ENCODE measurements at regions of chr16 and their contacts with region 1.

Region 1: DNA sequence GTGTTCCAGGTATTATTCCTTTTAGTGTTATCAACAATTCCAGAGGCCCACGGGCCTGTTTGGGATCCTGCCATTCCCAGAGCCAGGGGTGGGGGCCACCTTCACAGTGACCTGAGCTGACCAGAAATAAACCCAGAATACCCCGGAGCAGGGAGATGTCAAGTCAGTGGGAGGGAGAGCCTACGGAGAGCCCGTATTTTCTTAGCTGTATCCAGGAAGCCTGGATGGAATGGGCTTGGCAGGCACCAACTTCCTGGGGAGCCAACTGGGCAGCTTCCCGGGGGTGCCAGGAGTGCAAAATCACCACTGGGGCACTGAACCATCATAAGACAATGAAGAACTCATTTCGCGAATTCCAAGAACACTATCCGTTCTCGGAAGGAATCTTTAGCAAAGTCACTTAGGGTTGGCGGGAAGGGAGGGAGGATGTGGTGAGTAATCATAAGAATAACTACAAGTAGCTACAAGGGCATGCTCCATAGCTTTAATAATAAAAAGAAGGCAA is 13.2 kb upstream of the MRTFB start:
- DNase-seq: peak; percentile 96
- H3K4me3 ChIP-seq: peak overlapping the region in 1 of 3 experiments; percentile 12
- H3K27ac ChIP-seq: peak overlapping the region; percentile 99
- H3K4me1 ChIP-seq: peaks cover 26% of the 10 kb centered on the region
- H3K27me3 ChIP-seq: no peaks in the 10 kb centered on the region
- CTCF ChIP-seq: no peak
- POLR2A ChIP-seq: peak; percentile 57

Region 2: GRCh38 chr16:14003074-14003570 is 54.8 kb before region 1 on chr16:
- CTCF ChIA-PET with region 1: interaction called, 3 read pairs
- POLR2A ChIA-PET with region 1: no interaction called
- dilution Hi-C with region 1: no loop called
- intact Hi-C with region 1: loop called (anchors 2 kb)
- DNase-seq: peak; percentile 29
- H3K4me3 ChIP-seq: peak overlapping the region in 2 of 3 experiments; percentile 7 to 12
- H3K27ac ChIP-seq: no peak overlapping the region
- H3K4me1 ChIP-seq: peaks cover 16% of the 10 kb centered on the region
- H3K27me3 ChIP-seq: peaks cover 8 to 11% of the 10 kb centered on the region in 2 experiments
- CTCF ChIP-seq: no peak
- POLR2A ChIP-seq: no peak

Region 3: DNA sequence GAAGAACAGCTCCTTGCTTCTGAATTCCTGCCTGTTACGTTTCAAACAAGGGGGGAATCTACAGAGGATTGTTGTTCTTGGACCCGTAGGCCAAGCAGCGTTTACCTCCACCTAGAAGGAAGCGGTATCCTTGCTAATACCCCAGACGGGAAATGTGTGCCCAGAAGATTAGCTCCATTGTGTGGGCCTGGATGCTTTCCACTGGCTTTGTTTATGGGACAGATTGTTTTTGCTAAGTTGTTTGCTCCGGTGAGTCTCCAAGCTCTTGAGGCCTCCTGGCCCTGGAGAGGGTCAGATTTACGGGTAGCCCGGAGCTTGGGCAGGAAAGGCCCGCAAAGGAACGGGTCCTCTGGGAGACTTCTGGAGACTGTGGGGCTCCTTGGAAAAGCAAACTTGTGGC is 15.2 kb before region 1 on chr16:
- CTCF ChIA-PET with region 1: interaction called, 22 read pairs
- POLR2A ChIA-PET with region 1: interaction called, 29 read pairs
- dilution Hi-C with region 1: no loop called
- intact Hi-C with region 1: loop called (anchors 1 kb)
- DNase-seq: peak; percentile 99
- H3K4me3 ChIP-seq: no peak overlapping the region
- H3K27ac ChIP-seq: peak overlapping the region; percentile 56
- H3K4me1 ChIP-seq: peaks cover 21% of the 10 kb centered on the region
- H3K27me3 ChIP-seq: no peaks in the 10 kb centered on the region
- CTCF ChIP-seq: no peak
- POLR2A ChIP-seq: peak; percentile 64

Region 4: DNA sequence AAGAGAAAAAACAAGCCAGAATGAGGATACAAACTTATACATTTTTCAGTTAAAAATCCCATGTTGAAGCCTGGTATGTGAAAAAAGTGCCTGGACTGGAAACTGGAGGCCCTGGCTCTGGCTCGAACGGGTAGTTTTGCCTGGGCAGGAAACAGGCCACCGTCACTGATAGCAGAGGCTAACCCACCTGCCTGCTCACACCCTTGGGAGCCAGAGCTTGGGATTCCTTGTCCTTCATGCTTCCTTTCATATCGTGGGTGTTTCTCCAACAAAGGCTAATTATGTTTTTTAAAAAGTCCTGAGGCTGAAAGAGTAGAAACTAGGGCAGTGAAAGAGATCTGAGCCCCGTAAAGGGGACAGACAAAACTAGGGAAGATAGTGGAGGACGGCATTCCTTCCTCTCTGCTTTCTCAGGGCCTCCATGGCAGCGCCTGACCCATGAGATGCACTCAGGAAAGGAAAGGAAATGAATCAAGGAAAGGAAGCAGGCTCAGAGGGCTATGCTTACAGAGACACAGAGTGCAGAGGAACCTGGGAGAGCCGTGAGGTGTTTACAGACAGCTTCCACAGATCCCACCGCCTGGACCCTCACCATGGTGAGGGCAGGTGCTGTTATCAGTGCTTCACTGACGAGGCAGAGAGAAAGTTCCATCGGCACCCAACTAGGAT is 434.1 kb after region 1 on chr16:
- CTCF ChIA-PET with region 1: no interaction called
- POLR2A ChIA-PET with region 1: no interaction called
- dilution Hi-C with region 1: no loop called
- intact Hi-C with region 1: loop called (anchors 5 kb)
- DNase-seq: peak; percentile 78
- H3K4me3 ChIP-seq: no peak overlapping the region
- H3K27ac ChIP-seq: peak overlapping the region; percentile 86
- H3K4me1 ChIP-seq: peaks cover 30% of the 10 kb centered on the region
- H3K27me3 ChIP-seq: no peaks in the 10 kb centered on the region
- CTCF ChIP-seq: no peak
- POLR2A ChIP-seq: peak; percentile 36